ENCODE measurements at regions of chr9 and their contacts with region 1.

Region 1: DNA sequence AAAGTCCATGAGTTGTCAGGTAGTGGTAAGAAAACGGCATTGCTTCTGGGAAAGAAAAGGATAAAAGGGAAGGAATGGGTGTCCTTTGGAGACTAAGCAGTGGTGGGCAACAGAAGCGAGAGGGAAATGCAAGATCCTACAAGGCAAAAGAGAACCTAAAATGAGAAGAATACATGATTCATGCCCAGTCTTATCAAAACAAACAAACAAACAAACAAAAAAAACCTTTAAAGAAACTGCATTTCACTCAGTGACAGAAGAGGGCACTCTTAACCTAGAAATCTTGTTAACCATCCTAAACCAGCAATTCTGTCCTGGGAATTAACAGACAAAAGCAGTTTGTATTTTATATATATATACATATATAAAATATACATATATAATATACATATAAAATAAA is 88.5 kb downstream of the SUSD1 start:
- DNase-seq: no peak
- H3K4me3 ChIP-seq: no peak overlapping the region
- H3K27ac ChIP-seq: no peak overlapping the region
- H3K4me1 ChIP-seq: no peaks in the 10 kb centered on the region
- H3K27me3 ChIP-seq: no peaks in the 10 kb centered on the region
- CTCF ChIP-seq: peak; percentile 72

Region 2: GRCh38 chr9:112361601-112362000 is 275.0 kb after region 1 on chr9:
- intact Hi-C with region 1: loop called (anchors 5 kb)
- DNase-seq: no peak
- H3K4me3 ChIP-seq: no peak overlapping the region
- H3K27ac ChIP-seq: no peak overlapping the region
- H3K4me1 ChIP-seq: no peaks in the 10 kb centered on the region
- H3K27me3 ChIP-seq: no peaks in the 10 kb centered on the region
- CTCF ChIP-seq: peak; percentile 67